Ovary (tissue), 10 donors: ENCODE measurements at regions of chr1 and their contacts with region 1.

Region 1: DNA sequence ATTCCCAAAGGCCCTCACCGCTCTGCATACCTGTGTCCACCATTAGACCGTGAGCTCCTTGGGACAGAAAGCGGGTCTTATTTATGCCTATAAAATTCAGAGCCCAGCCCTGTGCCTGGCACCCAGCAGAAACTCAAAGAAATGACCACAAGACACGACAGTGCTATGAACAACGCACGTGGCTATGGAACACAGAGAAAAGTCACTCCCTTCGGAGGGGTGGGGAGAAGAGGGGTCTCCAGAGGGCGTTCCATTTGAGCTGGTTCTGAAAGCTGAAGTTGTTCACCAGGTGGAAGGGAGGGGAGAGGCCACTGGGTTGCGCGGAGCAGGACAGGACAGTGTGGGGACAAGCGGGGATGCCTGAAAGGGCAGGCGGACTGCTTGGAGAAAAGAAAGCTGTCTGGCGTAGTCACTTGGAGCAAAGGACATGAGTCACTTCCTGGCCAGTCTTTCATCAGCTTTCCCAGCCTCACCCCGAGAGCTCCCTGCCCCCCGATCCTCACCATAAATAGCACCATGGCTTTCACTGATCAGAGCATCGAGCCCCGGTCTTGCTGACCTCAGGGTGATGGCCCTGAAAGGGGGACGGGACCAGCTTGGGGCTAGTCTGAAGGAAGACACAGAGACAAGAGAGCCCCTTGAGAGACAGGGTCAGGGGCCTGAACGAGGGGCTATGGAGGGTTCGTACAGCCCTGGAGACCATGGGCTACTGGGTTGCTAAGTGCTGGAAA is 28.5 kb downstream of the ECE1 start:
- DNase-seq: peak in 1 of 5 donors; percentile 76
- H3K4me3 ChIP-seq: no peak overlapping the region
- H3K27ac ChIP-seq: peak overlapping the region; percentile 76 to 81
- H3K4me1 ChIP-seq: peaks cover 6% of the 10 kb centered on the region
- H3K27me3 ChIP-seq: no peaks in the 10 kb centered on the region
- CTCF ChIP-seq: no peak
- EP300 ChIP-seq: no peak
- POLR2A ChIP-seq: peak; percentile 27

Region 2: DNA sequence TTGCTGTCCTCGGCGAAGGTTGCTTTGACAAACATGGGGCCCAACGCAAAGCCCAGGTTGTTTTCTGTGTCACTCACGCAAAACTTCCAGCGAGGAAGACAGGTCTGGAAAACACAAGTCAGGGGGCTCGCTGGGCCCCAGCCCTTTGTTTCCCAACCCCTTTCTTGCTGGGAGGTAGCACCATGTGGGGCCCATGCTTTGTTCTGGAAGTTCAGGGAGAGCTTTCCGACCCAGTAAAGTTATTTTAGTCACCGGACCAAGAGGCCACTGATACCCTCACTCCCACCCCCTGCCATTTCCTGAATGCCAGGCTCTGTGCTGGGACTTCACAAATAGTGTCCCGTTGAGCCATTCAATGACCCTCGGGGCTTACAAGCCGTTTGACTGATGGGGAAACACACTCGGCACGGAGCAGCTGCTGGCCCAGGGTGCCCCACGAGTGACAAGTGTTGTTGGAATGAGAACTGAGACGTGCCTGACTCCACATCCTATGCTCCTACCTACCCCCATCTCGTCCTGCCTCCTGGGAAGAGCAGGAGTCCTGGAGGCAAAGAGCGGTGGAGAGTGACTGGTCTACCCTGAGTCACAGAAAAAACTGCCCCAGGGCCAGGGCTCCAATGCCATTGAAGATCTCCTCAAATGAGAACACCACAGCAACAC is 23.4 kb before region 1 on chr1:
- intact Hi-C with region 1: no loop called
- DNase-seq: no peak
- H3K4me3 ChIP-seq: no peak overlapping the region
- H3K27ac ChIP-seq: no peak overlapping the region
- H3K4me1 ChIP-seq: no peaks in the 10 kb centered on the region
- H3K27me3 ChIP-seq: no peaks in the 10 kb centered on the region
- CTCF ChIP-seq: no peak
- EP300 ChIP-seq: no peak
- POLR2A ChIP-seq: no peak

Region 3: DNA sequence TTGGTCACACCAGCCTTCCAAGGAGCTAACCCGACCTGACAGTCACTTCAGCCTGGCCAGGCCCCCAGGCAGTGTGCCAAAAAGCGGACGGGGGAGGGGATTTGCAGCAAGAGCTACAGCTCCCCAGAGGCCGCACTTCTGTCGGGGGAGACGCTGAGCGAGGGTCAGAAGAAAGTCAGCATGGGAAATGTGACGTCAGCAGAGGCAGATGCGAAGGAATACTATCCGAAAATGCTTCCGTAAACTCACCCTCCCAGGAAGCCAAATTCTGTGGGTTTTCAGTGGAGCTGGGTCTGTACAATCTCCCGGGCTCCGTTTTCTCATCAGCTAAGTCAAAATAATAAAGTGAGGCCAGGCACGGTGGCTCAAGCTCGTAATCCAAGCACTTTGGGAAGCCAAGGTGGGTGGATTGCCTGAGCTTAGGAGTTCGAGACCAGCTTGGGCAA is 57.0 kb after region 1 on chr1:
- intact Hi-C with region 1: no loop called
- DNase-seq: peak; percentile 99 to 100 (median 99)
- H3K4me3 ChIP-seq: no peak overlapping the region
- H3K27ac ChIP-seq: peak overlapping the region; percentile 83 to 93
- H3K4me1 ChIP-seq: peaks cover 47% of the 10 kb centered on the region
- H3K27me3 ChIP-seq: no peaks in the 10 kb centered on the region
- CTCF ChIP-seq: no peak
- EP300 ChIP-seq: peak; percentile 60
- POLR2A ChIP-seq: no peak

Region 4: DNA sequence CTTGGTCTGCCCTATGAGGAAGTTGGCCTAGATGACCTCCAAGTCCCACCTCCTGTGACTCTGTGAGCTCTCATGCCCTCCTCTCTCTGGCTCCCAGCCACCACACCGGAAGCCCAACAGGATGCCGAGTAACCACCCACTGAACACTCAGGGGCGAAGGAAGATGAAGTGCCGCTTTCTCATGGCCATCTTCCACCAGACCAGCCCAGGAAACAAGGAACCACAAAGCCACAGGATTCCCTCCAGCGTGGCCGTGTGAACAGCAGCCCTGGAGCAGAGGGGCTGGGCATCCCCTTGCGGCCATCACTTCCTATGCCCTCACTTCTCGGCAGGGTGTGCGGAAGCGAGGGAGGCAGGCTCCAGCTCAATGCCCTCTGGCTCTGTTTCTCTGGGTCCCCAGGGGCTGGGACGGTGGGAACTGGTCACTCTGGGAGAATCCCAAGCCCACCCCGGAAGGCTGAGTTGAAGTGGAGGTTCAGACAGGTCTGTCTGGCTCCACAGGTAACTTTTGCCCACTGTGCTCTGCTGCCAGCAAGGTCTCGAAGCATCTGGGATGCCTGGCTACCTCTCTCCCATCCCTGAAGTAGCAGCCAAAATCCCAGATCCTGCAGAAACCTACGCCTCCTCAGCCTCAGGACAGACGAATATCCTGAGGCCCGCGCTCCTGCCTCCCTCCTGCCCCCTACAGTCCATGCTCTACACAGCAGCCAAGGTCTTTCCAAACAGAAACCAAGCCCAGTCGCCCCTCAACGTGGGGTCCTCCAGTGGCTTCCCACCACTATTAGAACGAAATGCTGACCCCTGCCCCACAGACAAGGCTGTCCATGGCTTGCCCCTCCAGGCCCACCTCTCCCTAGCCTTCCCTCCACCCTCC is 72.7 kb after region 1 on chr1:
- intact Hi-C with region 1: loop called in 3 of 4 experiments (anchors 2 to 5 kb)
- DNase-seq: peak; percentile 68 to 83 (median 79)
- H3K4me3 ChIP-seq: peak overlapping the region; percentile 41
- H3K27ac ChIP-seq: peak overlapping the region; percentile 81 to 92
- H3K4me1 ChIP-seq: peaks cover 56% of the 10 kb centered on the region
- H3K27me3 ChIP-seq: no peaks in the 10 kb centered on the region
- CTCF ChIP-seq: peak; percentile 82 to 87 (median 82)
- EP300 ChIP-seq: no peak
- POLR2A ChIP-seq: no peak